Mucosa of descending colon (tissue), 3 donors: ENCODE measurements at regions of chr3 and their contacts with region 1.

Region 1: GRCh38 chr3:139427283-139427993 is 38.0 kb upstream of the COPB2 start:
- DNase-seq: peak in 1 of 3 donors; percentile 46
- ATAC-seq: peak; percentile 85
- H3K4me3 ChIP-seq: no peak overlapping the region
- H3K4me1 ChIP-seq: no peaks in the 10 kb centered on the region
- CTCF ChIP-seq: peak; percentile 60

Region 2: DNA sequence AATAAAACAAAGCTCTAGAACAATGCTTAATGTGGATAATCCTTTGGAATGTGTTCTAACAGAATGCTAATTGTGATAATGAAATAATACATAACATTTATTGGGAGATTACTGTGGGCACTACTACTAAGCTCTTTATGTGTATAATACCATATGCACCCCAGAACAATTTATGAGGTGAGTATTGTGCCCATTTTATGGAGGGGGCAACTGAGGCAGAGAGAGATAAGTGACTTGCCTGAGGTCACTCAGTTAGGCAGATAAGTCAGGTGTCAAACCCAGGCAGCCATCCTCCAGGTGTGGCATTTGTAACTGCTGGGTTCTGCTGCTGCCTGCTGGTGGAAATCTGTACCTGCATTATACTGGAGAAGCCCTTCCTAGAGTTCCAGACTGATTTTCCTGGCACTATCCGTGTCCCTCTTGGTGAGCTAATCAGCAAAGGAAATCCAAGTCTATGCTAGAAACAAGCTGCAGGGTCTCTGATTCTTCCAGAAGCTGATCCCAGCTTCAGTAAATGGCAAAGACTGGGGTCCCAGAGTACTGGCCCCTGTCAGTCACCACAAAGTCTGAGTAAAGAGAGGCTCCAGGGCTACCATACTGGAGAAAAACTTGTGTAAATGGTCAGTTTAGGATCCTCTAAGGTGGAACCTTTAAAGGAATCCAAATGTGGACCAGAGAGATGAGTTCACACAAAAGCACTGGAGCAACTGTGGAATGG is 134.7 kb after region 1 on chr3:
- intact Hi-C with region 1: loop called (anchors 5 to 10 kb)
- DNase-seq: peak in 1 of 3 donors; percentile 56
- ATAC-seq: peak; percentile 77
- H3K4me3 ChIP-seq: no peak overlapping the region
- H3K4me1 ChIP-seq: no peaks in the 10 kb centered on the region
- CTCF ChIP-seq: peak; percentile 22

Region 3: DNA sequence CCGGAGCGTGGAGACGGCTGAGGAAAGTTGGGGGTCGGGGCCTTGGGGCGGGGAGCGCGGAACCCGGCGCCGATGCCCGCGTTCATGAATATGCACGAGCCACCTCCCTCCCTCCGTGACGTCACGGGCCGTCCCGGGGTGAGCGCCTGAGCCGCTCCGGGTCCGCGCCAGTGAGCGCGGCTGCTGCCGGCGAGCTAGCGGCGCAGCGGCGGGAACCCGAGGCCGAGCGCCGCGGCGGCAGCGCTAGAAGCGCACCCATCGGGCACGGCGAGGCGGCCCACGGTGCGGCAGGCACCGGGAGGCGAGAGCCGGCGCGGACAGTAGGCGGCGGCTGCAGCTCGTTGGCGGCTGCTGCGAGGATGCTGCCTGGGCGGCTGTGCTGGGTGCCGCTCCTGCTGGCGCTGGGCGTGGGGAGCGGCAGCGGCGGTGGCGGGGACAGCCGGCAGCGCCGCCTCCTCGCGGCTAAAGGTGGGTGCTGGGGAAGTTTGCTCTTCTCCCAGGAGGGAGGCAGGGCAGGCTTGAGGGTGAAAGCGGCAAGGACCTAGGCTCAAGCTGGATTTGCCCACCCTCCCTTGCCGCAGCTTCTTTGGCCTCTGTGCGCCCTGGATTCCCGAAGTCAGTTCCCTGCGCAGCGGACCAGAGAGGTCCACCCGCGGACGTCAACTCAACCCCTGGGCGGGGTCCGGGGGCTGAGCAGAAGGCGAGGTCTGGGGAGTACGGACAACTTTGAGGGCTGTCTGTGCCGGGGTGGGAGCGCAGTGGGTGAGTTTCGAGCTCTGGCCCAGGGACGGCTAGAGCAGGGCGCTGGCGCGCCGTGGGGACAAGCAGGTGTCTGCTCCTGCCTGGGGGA is 507.8 kb after region 1 on chr3 and contains the start of gene CLSTN2:
- intact Hi-C with region 1: loop called in 1 of 2 experiments (anchors 10 kb)
- DNase-seq: peak; percentile 52 to 57 (median 52)
- ATAC-seq: peak; percentile 75
- H3K4me3 ChIP-seq: no peak within 1 kb of the TSS
- H3K4me1 ChIP-seq: peaks cover 15% of the 10 kb centered on the region
- CTCF ChIP-seq: no peak
- total RNA-seq, gene CLSTN2: 0.90 to 5.3 (median 2.5) TPM